Sigmoid colon (tissue), 7 donors: ENCODE measurements at regions of chr14 and their contacts with region 1.

Region 1: GRCh38 chr14:92456215-92457015 is 57.2 kb upstream of the RIN3 start:
- DNase-seq: peak; percentile 82
- H3K4me3 ChIP-seq: no peak overlapping the region
- H3K27ac ChIP-seq: no peak overlapping the region
- H3K4me1 ChIP-seq: peaks cover 0 to 8% (median 7%) of the 10 kb centered on the region in 4 donors
- H3K27me3 ChIP-seq: no peaks in the 10 kb centered on the region
- CTCF ChIP-seq: peak; percentile 38 to 73 (median 58)
- EP300 ChIP-seq: no peak
- POLR2A ChIP-seq: no peak

Region 2: DNA sequence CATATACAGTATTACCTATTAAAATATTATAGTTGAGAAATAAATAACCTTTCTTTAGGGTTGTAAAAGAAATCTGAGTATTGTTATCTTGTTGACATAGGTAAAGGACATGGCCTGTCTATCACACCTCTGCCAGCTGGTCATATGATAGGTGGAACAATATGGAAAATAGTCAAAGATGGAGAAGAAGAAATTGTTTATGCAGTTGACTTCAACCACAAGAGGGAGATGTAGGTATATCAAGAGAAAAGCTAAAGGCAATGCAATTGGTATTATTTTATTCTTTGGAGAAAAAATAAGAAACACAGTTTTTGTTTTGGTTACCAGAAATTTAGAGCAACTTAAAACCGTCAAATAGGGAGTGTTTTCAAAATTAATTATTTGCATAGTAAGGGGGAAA is 321.1 kb before region 1 on chr14:
- intact Hi-C with region 1: loop called (anchors 2 kb)
- DNase-seq: no peak
- H3K4me3 ChIP-seq: no peak overlapping the region
- H3K27ac ChIP-seq: no peak overlapping the region
- H3K4me1 ChIP-seq: no peaks in the 10 kb centered on the region
- H3K27me3 ChIP-seq: no peaks in the 10 kb centered on the region
- CTCF ChIP-seq: peak in 3 of 4 experiments; percentile 28 to 50 (median 37)
- EP300 ChIP-seq: no peak
- POLR2A ChIP-seq: no peak

Region 3: DNA sequence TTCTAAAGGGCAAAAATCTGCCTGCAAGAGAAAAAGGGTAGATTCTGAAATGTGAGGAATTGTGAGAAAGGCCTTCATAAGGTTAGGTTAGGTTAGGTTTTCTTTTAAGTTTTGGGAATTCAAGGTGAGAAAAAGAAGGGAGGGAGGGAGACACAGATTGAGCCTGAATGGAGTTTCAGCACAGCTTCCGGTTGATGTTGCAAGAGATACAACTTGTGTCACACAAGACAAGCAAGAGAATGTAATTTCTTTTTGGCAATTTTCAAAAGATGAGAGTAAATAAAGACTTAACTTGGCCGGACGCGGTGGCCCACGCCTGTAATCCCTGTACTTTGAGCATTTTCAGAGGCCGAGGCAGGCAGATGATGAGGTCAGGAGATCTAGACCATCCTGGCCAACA is 270.9 kb before region 1 on chr14:
- intact Hi-C with region 1: no loop called
- DNase-seq: no peak
- H3K4me3 ChIP-seq: no peak overlapping the region
- H3K27ac ChIP-seq: no peak overlapping the region
- H3K4me1 ChIP-seq: no peaks in the 10 kb centered on the region
- H3K27me3 ChIP-seq: no peaks in the 10 kb centered on the region
- CTCF ChIP-seq: no peak
- EP300 ChIP-seq: no peak
- POLR2A ChIP-seq: no peak

Region 4: DNA sequence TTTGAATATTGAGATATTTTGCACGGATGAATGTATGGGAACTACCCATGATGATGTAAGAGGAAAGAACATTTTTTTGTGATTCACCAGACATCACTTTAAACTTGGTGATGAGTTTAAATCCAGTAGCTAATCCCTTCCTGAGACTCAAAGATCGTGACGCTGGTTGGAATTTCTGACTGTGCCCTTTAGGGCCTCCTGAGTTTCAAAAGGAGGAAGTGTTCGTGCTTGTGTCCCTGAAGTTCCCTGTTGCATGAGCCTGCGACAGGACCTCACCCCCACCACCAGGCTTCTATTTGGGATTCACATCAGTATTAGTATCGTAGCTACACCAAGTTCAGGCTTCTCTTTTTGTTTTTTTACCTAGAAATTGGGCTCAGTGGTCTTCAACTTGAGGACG is 38.6 kb after region 1 on chr14:
- intact Hi-C with region 1: no loop called
- DNase-seq: no peak
- H3K4me3 ChIP-seq: no peak overlapping the region
- H3K27ac ChIP-seq: peak overlapping the region in 1 of 4 donors; percentile 2
- H3K4me1 ChIP-seq: no peaks in the 10 kb centered on the region
- H3K27me3 ChIP-seq: no peaks in the 10 kb centered on the region
- CTCF ChIP-seq: no peak
- EP300 ChIP-seq: no peak
- POLR2A ChIP-seq: no peak